ENCODE measurements at regions of chr2 and their contacts with region 1.

Region 1: GRCh38 chr2:163155279-163155883 is 316.8 kb upstream of the KCNH7 start:
- DNase-seq: peak; percentile 30
- H3K4me3 ChIP-seq: no peak overlapping the region
- H3K27ac ChIP-seq: no peak overlapping the region
- H3K4me1 ChIP-seq: peaks cover 4% of the 10 kb centered on the region
- H3K27me3 ChIP-seq: no peaks in the 10 kb centered on the region
- CTCF ChIP-seq: peak; percentile 59 to 69

Region 2: GRCh38 chr2:163119966-163120365 is 35.4 kb before region 1 on chr2:
- CTCF ChIA-PET with region 1: no interaction called
- dilution Hi-C with region 1: no loop called
- in situ Hi-C with region 1: no loop called
- intact Hi-C with region 1: no loop called
- DNase-seq: no peak
- H3K4me3 ChIP-seq: no peak overlapping the region
- H3K27ac ChIP-seq: no peak overlapping the region
- H3K4me1 ChIP-seq: no peaks in the 10 kb centered on the region
- H3K27me3 ChIP-seq: peaks cover 4% of the 10 kb centered on the region
- CTCF ChIP-seq: no peak

Region 3: GRCh38 chr2:163246135-163246534 is 90.8 kb after region 1 on chr2:
- CTCF ChIA-PET with region 1: no interaction called
- dilution Hi-C with region 1: no loop called
- in situ Hi-C with region 1: no loop called
- intact Hi-C with region 1: no loop called
- DNase-seq: no peak
- H3K4me3 ChIP-seq: no peak overlapping the region
- H3K27ac ChIP-seq: no peak overlapping the region
- H3K4me1 ChIP-seq: peaks cover 7% of the 10 kb centered on the region
- H3K27me3 ChIP-seq: no peaks in the 10 kb centered on the region
- CTCF ChIP-seq: no peak

Region 4: DNA sequence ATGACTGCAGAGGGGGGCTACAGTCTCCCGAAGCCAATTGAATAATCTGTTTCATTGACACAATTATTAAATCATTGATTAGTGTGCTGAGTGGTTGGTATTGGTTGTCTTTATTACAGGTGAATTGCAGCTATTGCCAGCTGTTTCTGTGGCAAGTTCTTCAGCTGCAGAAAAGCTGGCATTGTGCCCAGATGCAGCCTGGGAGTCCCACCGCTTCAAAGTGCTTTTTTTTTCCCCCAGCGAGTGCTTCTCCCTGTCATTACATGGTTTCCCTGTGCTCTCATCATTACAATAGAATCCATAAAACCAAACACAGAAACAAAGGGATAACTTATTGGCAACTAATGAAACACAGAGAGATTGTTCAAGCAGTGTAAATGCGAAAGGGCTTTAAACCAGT is 1301.2 kb after region 1 on chr2:
- CTCF ChIA-PET with region 1: no interaction called
- dilution Hi-C with region 1: no loop called
- in situ Hi-C with region 1: loop called in 1 of 2 experiments (anchors 25 kb)
- intact Hi-C with region 1: no loop called
- DNase-seq: no peak
- H3K4me3 ChIP-seq: no peak overlapping the region
- H3K27ac ChIP-seq: no peak overlapping the region
- H3K4me1 ChIP-seq: no peaks in the 10 kb centered on the region
- H3K27me3 ChIP-seq: peaks cover 2% of the 10 kb centered on the region
- CTCF ChIP-seq: no peak

Region 5: GRCh38 chr2:164495491-164496223 is 1340.3 kb after region 1 on chr2:
- CTCF ChIA-PET with region 1: no interaction called
- dilution Hi-C with region 1: no loop called
- in situ Hi-C with region 1: loop called in 1 of 2 experiments (anchors 25 kb)
- intact Hi-C with region 1: loop called (anchors 5 kb)
- DNase-seq: peak; percentile 50
- H3K4me3 ChIP-seq: no peak overlapping the region
- H3K27ac ChIP-seq: no peak overlapping the region
- H3K4me1 ChIP-seq: no peaks in the 10 kb centered on the region
- H3K27me3 ChIP-seq: no peaks in the 10 kb centered on the region
- CTCF ChIP-seq: peak; percentile 60 to 74